Activated CD8-positive, alpha-beta T cell treated with anti-CD3 and anti-CD28 coated beads, Interleukin-2, amount 10 ng/mL, durations not matched to agents 7 days and 5 days (primary cell): ENCODE measurements at regions of chr17 and their contacts with region 1.

Region 1: GRCh38 chr17:77404812-77405581 is 264.2 kb downstream of the SEC14L1 start:
- DNase-seq: peak; percentile 94
- ATAC-seq: peak; percentile 75
- H3K4me3 Mint-ChIP-seq: peak overlapping the region; percentile 92
- H3K27ac Mint-ChIP-seq: peak overlapping the region; percentile 89
- H3K4me1 Mint-ChIP-seq: peaks cover 97% of the 10 kb centered on the region
- H3K27me3 Mint-ChIP-seq: no peaks in the 10 kb centered on the region

Region 2: DNA sequence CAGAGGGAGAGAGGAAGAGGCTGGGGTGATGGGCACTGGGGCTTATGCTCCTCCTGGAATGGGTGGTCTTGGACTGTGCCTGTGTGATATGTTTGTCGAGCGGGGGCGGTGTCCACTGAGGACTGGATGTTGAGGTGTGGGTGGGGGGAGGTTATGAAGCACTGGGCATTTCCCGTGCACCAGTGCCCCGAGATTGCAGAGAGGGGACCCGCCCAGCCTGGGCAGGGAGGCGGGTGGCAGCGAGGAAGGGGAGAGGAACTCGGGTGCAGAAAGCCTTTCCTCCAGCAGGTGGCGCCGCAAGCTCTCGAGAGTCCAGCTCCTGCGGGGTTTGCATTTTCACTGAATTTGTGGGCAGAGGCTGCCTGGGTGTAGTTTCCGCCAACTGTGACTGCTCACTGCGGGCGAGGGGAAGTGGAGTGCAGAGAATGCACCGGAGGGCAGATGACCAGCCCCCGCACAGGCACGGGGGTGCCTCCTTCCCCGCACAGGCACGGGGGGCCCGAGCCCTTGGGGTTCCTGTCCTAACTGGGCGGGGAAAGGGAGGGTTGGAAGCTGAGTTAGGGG is 73.6 kb before region 1 on chr17:
- CTCF ChIA-PET with region 1: interaction called, 34 read pairs
- POLR2A ChIA-PET with region 1: interaction called, 6 read pairs
- DNase-seq: peak; percentile 97
- ATAC-seq: peak; percentile 90
- H3K4me3 Mint-ChIP-seq: peak overlapping the region; percentile 76
- H3K27ac Mint-ChIP-seq: peak overlapping the region; percentile 88
- H3K4me1 Mint-ChIP-seq: peaks cover 58% of the 10 kb centered on the region
- H3K27me3 Mint-ChIP-seq: peaks cover 2% of the 10 kb centered on the region

Region 3: GRCh38 chr17:77391668-77392375 is 13.2 kb before region 1 on chr17:
- CTCF ChIA-PET with region 1: interaction called, 73 read pairs
- POLR2A ChIA-PET with region 1: interaction called, 25 read pairs
- DNase-seq: peak; percentile 84
- ATAC-seq: peak; percentile 54
- H3K4me3 Mint-ChIP-seq: peak overlapping the region; percentile 84
- H3K27ac Mint-ChIP-seq: peak overlapping the region; percentile 92
- H3K4me1 Mint-ChIP-seq: peaks cover 89% of the 10 kb centered on the region
- H3K27me3 Mint-ChIP-seq: no peaks in the 10 kb centered on the region

Region 4: GRCh38 chr17:77437017-77437416 is 32.0 kb after region 1 on chr17:
- CTCF ChIA-PET with region 1: interaction called, 32 read pairs
- POLR2A ChIA-PET with region 1: interaction called, 11 read pairs
- DNase-seq: no peak
- ATAC-seq: no peak
- H3K4me3 Mint-ChIP-seq: peak overlapping the region; percentile 87
- H3K27ac Mint-ChIP-seq: peak overlapping the region; percentile 91
- H3K4me1 Mint-ChIP-seq: peaks cover 95% of the 10 kb centered on the region
- H3K27me3 Mint-ChIP-seq: no peaks in the 10 kb centered on the region

Region 5: DNA sequence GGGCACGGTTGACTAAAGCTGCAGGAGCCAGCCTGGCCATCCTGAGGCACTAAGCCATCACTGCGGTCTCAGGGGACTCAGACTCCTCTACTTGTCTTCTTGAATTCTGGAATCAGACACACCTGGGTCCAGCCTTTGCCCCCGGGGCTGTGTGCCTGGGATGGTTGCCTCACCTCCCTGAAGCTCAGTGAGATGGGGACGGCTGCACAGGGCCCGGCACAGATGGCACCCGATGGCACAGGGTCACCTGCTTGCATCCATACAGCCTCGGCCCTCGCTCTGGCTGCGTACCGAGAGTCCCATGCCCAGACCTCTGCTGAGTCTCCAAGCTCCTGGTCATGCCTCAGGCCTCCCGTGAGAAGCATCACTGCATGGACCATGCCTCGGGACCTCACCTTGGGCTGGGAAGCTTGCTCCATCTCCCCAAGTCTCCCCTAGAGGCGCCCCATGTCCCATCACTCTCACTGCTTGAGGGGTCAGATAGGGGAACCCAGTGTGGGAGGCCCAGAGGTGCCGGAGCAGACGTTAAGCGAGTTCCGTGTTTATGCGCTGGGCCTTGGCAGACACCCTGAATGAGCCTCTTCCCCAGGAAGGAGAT is 52.1 kb after region 1 on chr17:
- CTCF ChIA-PET with region 1: interaction called, 28 read pairs
- POLR2A ChIA-PET with region 1: interaction called, 7 read pairs
- DNase-seq: peak; percentile 59
- ATAC-seq: no peak
- H3K4me3 Mint-ChIP-seq: peak overlapping the region; percentile 85
- H3K27ac Mint-ChIP-seq: peak overlapping the region; percentile 93
- H3K4me1 Mint-ChIP-seq: peaks cover 76% of the 10 kb centered on the region
- H3K27me3 Mint-ChIP-seq: no peaks in the 10 kb centered on the region

Region 6: DNA sequence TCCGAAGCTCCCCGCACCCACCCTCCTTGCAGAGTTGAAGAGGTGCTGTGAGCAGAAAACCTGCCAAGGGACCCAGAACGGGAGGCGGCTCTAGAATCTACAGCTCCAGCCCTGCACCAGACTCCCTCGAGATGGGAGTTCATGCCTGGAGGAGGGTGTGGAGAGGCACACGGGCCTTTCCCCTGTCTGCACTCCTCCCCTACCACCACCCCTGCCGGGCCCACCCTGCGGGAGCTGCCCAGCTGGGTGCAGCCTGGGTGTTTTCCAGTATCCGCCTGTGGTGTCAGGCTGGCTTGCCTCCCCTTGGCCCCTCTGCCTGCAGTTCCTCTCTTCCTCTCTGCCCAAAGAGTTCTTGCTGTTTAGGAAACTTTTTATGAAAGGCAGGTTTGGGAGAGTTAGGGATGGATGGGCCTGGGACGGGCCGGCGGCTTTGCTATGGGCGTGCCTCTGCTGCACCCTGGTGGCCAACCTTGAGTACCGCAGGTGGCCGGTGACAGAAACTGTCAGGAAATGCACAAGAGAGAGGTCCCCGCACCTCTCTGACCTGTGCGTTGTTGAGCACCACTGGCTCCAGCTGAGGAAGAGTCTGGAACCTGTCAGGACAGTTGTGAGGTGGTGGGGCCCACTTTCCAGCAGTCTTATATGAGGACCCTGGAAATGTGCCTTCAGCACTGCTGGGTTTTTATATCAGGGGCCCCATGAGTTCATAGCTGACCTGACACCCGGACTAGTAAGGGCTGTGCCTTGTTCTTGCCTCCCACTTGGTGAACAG is 89.9 kb after region 1 on chr17:
- CTCF ChIA-PET with region 1: interaction called, 29 read pairs
- POLR2A ChIA-PET with region 1: interaction called, 3 read pairs
- DNase-seq: peak; percentile 83
- ATAC-seq: peak; percentile 66
- H3K4me3 Mint-ChIP-seq: no peak overlapping the region
- H3K27ac Mint-ChIP-seq: peak overlapping the region; percentile 78
- H3K4me1 Mint-ChIP-seq: peaks cover 40% of the 10 kb centered on the region
- H3K27me3 Mint-ChIP-seq: no peaks in the 10 kb centered on the region